ENCODE measurements at regions of chr2 and their contacts with region 1.

Region 1: DNA sequence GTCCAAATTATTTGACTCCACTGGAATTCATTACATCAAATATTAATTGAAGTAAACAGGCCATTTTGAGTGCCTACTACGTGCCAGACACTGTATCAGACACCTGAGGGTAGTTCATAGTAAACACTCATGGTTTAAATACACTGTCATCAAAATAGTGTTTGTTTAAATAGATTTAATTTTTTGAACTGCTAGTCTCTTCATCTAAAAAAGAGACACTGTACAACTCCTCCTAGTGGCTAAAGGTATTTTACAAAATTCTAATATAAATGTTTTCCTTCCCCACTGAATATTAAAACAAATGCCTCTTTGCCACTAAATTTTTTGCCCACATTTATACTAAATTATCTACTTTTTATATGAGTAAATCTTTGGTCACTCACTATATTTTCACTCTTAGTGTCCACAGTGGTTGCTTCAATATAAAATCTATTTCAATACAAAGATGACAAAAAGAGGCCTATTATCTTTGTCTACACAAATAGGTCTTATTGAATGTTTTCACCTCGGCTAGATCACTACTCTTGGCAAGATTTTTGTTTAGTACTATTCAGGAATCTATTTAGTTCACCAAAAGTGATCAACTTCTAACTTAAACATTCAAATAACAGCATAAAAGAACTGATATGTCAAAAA is 122.1 kb downstream of the TMEM247 start:
- DNase-seq: peak; percentile 18
- H3K4me3 ChIP-seq: no peak overlapping the region
- H3K27ac ChIP-seq: no peak overlapping the region
- H3K4me1 ChIP-seq: no peaks in the 10 kb centered on the region
- H3K27me3 ChIP-seq: no peaks in the 10 kb centered on the region
- CTCF ChIP-seq: peak; percentile 19 to 33
- POLR2A ChIP-seq: no peak

Region 2: DNA sequence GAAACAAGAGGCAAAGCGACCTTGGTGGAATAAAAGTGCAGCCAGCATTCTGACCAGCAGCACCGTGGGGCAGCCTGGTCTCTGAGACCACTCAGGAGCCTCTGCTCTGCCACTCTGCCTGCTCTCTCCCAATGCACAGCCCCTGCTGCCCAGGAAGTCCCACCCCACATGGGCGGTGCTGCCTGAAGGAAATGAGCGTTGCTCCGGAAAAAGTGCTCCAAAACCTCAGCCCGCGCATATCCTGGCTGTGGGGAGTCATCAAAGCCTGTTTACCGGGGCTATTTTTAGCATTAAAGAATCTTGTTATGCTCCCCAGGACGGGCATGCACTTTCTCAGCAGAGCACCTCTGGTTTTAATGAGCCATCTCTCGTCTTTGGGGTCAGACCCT is 249.7 kb before region 1 on chr2:
- CTCF ChIA-PET with region 1: no interaction called
- POLR2A ChIA-PET with region 1: no interaction called
- dilution Hi-C with region 1: no loop called
- intact Hi-C with region 1: no loop called
- DNase-seq: peak; percentile 95
- H3K4me3 ChIP-seq: peak overlapping the region in 1 of 3 experiments; percentile 10
- H3K27ac ChIP-seq: peak overlapping the region; percentile 61
- H3K4me1 ChIP-seq: peaks cover 50% of the 10 kb centered on the region
- H3K27me3 ChIP-seq: no peaks in the 10 kb centered on the region
- CTCF ChIP-seq: no peak
- POLR2A ChIP-seq: peak; percentile 51

Region 3: DNA sequence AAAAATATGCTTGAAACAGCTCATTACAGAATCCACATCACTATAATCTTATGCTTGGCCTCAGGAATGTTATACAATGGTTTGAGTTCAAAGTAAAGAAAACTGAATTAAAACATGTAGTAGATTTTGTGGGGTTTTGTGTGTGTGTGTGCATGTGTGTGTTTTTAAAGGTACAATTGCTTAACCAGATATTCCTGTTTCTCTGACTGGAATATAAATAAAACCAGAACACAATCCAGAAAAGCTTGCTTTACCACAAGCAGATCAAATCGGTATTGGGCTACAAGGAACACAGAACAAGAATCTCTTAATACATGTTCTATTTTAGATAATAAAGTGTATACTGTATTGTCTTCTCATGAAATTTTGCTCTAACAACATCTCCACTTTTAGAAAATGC is 12.1 kb before region 1 on chr2:
- CTCF ChIA-PET with region 1: interaction called, 8 read pairs
- POLR2A ChIA-PET with region 1: no interaction called
- dilution Hi-C with region 1: no loop called
- intact Hi-C with region 1: loop called (anchors 1 kb)
- DNase-seq: no peak
- H3K4me3 ChIP-seq: no peak overlapping the region
- H3K27ac ChIP-seq: no peak overlapping the region
- H3K4me1 ChIP-seq: no peaks in the 10 kb centered on the region
- H3K27me3 ChIP-seq: no peaks in the 10 kb centered on the region
- CTCF ChIP-seq: no peak
- POLR2A ChIP-seq: no peak

Region 4: DNA sequence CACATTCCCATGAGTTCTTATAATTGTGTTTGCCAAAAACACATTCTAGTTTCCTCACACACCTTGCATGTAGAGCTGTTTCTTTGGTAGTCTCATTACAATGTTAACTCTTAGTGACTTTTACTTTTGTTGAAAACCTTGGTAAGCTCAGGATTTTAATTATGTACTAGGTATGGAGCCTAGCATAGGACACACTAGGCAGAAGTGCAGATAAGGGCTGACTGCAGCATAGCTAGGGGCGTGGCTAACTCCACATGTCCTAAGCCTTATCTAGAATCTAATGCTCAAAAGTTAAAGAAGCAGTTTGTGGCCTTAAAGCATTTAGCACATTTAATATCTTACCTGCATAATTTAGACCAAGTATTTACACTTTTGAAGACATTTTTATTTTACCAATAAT is 1458.5 kb after region 1 on chr2:
- CTCF ChIA-PET with region 1: no interaction called
- POLR2A ChIA-PET with region 1: no interaction called
- dilution Hi-C with region 1: no loop called
- intact Hi-C with region 1: no loop called
- DNase-seq: no peak
- H3K4me3 ChIP-seq: no peak overlapping the region
- H3K27ac ChIP-seq: no peak overlapping the region
- H3K4me1 ChIP-seq: no peaks in the 10 kb centered on the region
- H3K27me3 ChIP-seq: peaks cover 3 to 8% of the 10 kb centered on the region in 2 experiments
- CTCF ChIP-seq: no peak
- POLR2A ChIP-seq: no peak

Measured in endothelial cell of umbilical vein (primary cell).